Astrocyte of the cerebellum (primary cell): ENCODE measurements at regions of chr7 and their contacts with region 1.

Region 1: DNA sequence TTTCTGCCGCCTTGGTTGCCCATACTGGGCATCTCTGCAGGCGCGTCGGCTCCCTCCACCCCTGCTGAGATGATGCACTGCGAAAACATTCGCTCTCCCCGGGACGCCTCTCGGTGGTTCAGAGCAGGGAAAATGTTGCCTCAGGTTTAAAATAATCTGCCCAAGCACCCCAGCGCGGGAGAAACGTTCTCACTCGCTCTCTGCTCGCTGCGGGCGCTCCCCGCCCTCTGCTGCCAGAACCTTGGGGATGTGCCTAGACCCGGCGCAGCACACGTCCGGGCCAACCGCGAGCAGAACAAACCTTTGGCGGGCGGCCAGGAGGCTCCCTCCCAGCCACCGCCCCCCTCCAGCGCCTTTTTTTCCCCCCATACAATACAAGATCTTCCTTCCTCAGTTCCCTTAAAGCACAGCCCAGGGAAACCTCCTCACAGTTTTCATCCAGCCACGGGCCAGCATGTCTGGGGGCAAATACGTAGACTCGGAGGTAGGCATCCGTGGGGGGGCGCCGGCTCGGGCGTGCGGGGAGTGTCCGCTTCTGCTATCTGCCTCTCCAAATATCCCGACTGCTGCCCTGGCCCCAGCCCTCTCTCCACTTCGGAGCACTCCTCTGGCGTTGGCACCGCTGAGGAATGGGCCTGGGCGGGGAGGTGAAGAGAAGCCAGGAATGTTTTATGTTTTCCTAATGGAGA is at the start of gene CAV1:
- DNase-seq: peak; percentile 76
- H3K4me3 ChIP-seq: peak within 1 kb of the TSS; percentile 79
- CTCF ChIP-seq: no peak

Region 2: DNA sequence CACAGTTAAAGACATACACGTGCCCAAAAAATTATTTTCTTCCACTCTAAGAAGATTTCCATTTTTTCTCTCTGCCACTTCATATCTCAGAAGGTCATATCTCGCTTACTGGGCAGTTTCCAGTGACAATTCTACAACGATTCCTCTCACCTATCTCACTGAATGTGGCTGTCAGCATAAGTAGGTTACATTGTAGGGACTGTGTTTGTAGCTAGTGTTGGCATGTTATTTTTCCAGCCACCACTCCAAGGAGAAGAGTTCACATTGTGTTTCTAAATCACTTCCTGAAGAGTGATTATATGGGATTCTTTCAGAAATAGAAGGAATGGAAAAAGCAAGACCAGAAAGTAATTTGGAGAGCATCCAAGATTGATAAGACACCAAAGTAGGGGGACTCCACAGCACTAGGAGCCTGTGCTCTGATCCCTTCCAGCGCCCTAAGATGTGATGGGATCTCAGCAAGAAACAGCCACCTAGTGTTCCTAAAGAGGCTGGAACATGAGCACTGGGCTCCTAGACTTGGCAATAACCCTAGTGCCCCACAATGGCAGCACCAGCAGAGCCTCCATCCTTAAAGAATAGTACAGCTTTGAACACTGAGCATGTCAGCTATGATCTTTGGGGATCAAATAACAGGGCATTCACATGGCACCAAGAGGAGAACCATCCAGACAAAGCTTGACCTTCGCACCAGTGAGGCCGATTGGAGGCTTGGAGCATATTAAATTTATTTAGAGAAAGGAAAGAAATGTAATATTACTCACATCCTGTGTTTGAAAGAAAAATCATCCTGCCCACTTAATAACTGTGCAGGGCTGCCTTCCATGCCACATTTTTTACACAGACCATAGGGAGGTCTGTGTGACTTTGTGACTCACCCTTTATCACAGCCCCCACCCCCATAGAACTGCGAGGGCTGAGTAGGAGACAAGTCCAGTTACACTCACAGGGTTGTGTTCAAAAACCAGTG is 51.9 kb after region 1 on chr7:
- in situ Hi-C with region 1: loop called (anchors 5 kb)
- DNase-seq: peak; percentile 77
- H3K4me3 ChIP-seq: no peak overlapping the region
- CTCF ChIP-seq: no peak

Region 3: DNA sequence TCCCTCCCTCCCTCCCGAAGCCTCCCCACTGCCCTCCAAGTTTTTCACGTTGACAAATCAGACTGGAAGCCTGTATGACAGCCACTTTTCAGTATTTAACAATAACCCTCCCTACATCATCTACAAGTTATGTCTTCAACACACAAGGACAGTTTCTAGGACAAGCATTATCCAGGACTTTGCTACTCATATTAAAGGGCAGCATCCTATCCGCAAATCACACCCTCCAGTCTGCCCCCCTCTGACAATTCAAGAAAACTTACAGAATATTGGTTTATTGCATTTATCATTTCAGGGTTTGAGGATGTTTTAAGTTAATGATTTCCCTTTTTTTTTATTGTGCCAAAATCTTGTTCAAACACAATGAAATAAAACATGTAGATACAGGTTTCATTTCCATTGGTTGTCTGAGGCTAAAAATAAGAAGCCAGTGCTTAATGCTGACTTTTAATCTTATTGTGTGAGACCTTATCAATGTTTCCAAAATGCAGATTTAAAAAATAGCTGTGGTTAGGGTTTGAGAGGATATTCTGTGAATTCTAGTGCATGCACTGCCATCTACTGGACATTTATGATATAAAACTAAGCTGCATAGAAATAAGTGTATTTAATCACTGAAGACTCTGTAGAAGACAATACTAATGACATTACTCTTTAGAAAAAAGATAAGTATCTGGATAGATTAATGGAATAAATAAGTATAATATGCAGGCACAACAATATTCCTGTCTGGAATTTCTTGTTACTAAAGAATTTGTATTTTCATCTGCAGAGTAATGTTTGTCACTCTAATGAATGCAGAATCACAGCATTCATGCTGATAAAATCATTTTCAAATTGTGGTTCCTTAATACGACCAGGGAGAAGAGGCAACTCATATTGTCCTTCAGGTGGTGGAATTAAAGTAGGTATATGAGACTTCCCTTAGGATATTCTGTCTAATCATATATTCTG is 64.2 kb after region 1 on chr7:
- in situ Hi-C with region 1: no loop called
- DNase-seq: peak; percentile 65
- H3K4me3 ChIP-seq: no peak overlapping the region
- CTCF ChIP-seq: peak; percentile 12